ENCODE measurements at regions of chr17 and their contacts with region 1.

Region 1: GRCh38 chr17:18260332-18261144 is at the start of gene MIEF2:
- DNase-seq: peak; percentile 80 to 92 (median 91)
- ATAC-seq: peak; percentile 91
- H3K4me3 ChIP-seq: peak within 1 kb of the TSS; percentile 84
- H3K4me3 Mint-ChIP-seq: peak within 1 kb of the TSS; percentile 78 to 96 (median 84)
- H3K27ac ChIP-seq: peak within 1 kb of the TSS; percentile 95
- H3K27ac Mint-ChIP-seq: peak within 1 kb of the TSS; percentile 77 to 92 (median 84)
- H3K4me1 ChIP-seq: peaks cover 29 to 47% of the 10 kb centered on the region in 2 donors
- H3K4me1 Mint-ChIP-seq: peaks cover 11 to 57% (median 37%) of the 10 kb centered on the region in 7 donors
- H3K27me3 ChIP-seq: no peaks in the 10 kb centered on the region
- H3K27me3 Mint-ChIP-seq: no peaks in the 10 kb centered on the region
- total RNA-seq, gene MIEF2: 6.5 to 22.5 (median 15.1) TPM

Region 2: DNA sequence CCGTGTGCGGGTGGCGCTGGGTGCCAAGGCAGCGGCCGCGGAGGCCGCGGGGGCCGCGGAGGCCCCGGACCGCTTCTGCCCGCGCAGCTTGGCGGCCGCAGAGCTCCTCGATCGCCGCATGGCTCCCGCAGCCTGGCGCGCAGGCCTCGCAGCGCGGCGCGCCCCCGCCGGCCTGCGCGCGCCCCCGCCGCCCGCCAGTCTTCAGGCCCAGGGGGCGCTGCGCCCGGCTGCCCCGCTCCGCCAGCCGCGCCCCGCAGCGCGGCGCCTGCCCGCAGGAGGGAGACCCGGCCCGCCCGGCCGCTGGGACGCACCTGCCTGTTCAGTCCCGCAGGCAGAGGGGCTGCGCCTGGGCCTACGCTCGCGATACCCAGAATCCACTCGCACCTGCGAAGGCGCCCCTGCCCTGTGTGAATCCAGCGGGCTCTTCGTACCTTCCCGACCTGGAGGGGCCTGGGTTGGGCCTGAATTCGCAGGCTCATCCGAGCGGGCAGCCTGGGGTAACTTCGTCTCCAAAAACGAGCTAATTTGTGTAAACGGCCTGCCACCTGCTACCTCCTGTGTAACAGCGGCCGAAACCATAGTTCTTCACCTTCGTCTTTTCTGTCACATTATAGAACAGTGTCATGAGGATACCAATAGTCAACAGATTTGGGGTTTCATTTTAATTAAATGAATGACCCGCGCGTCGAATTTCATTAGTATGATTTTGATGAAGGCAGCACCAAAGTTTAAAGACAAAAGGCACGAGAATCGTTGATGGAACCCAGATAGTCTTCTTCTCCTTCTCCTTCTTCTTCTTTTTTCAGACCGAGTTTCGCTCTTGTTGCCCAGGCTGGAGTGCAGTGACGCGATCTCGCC is 1907.0 kb before region 1 on chr17 and contains the start of gene CENPV:
- CTCF ChIA-PET with region 1: no interaction called
- POLR2A ChIA-PET with region 1: no interaction called
- intact Hi-C with region 1: loop called in 1 of 2 experiments (anchors 2 kb)
- DNase-seq: peak; percentile 62 to 76 (median 71)
- ATAC-seq: peak; percentile 96
- H3K4me3 ChIP-seq: peak within 1 kb of the TSS; percentile 78
- H3K4me3 Mint-ChIP-seq: peak within 1 kb of the TSS; percentile 89 to 98 (median 95)
- H3K27ac ChIP-seq: peak within 1 kb of the TSS; percentile 73
- H3K27ac Mint-ChIP-seq: peak within 1 kb of the TSS; percentile 73 to 98 (median 86)
- H3K4me1 ChIP-seq: peaks cover 4 to 5% of the 10 kb centered on the region in 2 donors
- H3K4me1 Mint-ChIP-seq: peaks cover 11 to 23% (median 19%) of the 10 kb centered on the region in 7 donors
- H3K27me3 ChIP-seq: no peaks in the 10 kb centered on the region
- H3K27me3 Mint-ChIP-seq: peaks cover 0 to 27% (median 0%) of the 10 kb centered on the region in 5 donors
- total RNA-seq, gene CENPV: 9.8 to 30.3 (median 21.7) TPM

Region 3: DNA sequence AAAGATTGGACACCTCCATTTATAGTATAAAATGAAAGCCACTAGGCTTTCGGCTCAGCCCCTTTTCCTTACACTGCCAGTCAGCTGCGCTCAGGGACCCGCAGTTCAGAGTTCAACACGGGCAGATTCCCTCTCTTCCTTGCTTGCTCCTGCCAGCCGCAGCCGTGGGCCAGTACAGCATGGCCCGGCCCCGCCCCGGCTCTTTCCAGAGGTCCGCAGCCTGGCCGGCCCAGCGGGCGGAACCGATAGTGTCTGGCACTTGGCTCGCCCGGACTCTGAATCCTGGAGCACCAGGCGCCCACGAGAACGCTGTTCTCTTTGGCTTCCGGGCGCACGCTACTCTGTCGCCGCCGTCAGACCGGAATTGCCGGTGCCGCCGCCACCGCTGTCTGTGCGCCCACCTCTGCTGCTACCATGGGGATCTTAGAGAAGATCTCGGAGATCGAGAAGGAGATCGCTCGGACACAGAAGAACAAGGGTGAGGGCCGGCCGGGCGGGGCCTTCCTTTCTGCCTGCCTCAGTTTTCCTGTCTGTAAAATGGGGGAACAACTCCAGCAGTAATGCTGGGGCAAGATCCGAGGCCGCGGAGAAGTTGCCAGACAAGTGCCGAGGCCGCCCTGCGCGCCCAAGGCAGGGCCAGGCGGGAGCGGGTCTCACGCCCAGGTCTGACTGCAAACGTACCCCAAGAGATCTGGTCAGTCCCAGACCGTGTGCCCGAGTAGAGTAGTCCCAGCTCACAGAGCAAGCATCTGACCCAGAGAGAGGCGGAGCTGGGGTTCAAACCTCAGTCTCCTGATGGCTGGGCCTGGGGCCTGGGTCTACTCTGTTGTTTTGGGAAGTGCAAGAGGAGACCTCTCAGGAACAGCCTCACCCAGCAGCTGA is 172.7 kb before region 1 on chr17 and contains the start of gene DRG2:
- CTCF ChIA-PET with region 1: no interaction called
- POLR2A ChIA-PET with region 1: no interaction called
- intact Hi-C with region 1: loop called in 1 of 2 experiments (anchors 5 kb)
- DNase-seq: peak; percentile 79 to 94 (median 85)
- ATAC-seq: peak; percentile 98
- H3K4me3 ChIP-seq: peak within 1 kb of the TSS; percentile 84
- H3K4me3 Mint-ChIP-seq: peak within 1 kb of the TSS; percentile 97 to 100 (median 98)
- H3K27ac ChIP-seq: peak within 1 kb of the TSS; percentile 85
- H3K27ac Mint-ChIP-seq: peak within 1 kb of the TSS; percentile 96 to 99 (median 98)
- H3K4me1 ChIP-seq: peaks cover 9 to 12% of the 10 kb centered on the region in 2 donors
- H3K4me1 Mint-ChIP-seq: peaks cover 19 to 35% (median 27%) of the 10 kb centered on the region in 7 donors
- H3K27me3 ChIP-seq: no peaks in the 10 kb centered on the region
- H3K27me3 Mint-ChIP-seq: no peaks in the 10 kb centered on the region
- total RNA-seq, gene DRG2: 39.6 to 54.7 (median 48.8) TPM

Region 4: GRCh38 chr17:18225121-18225566 is 35.4 kb before region 1 on chr17:
- CTCF ChIA-PET with region 1: interaction called, 5 read pairs
- POLR2A ChIA-PET with region 1: interaction called, 3 read pairs
- intact Hi-C with region 1: loop called (anchors 1 kb)
- DNase-seq: peak; percentile 92 to 98 (median 94)
- ATAC-seq: peak; percentile 99
- H3K4me3 ChIP-seq: peak overlapping the region; percentile 46
- H3K4me3 Mint-ChIP-seq: peak overlapping the region; percentile 54 to 94 (median 68)
- H3K27ac ChIP-seq: peak overlapping the region; percentile 34
- H3K27ac Mint-ChIP-seq: peak overlapping the region in 4 of 9 donors; percentile 64 to 80 (median 77)
- H3K4me1 ChIP-seq: peaks cover 7 to 13% of the 10 kb centered on the region in 2 donors
- H3K4me1 Mint-ChIP-seq: peaks cover 24 to 30% (median 27%) of the 10 kb centered on the region in 7 donors
- H3K27me3 ChIP-seq: no peaks in the 10 kb centered on the region
- H3K27me3 Mint-ChIP-seq: no peaks in the 10 kb centered on the region

Region 5: GRCh38 chr17:18248300-18248731 is 12.2 kb before region 1 on chr17:
- CTCF ChIA-PET with region 1: interaction called, 4 read pairs
- POLR2A ChIA-PET with region 1: no interaction called
- intact Hi-C with region 1: loop called in 1 of 2 experiments (anchors 1 kb)
- DNase-seq: peak; percentile 47 to 75 (median 64)
- ATAC-seq: peak; percentile 84
- H3K4me3 ChIP-seq: no peak overlapping the region
- H3K4me3 Mint-ChIP-seq: no peak overlapping the region
- H3K27ac ChIP-seq: no peak overlapping the region
- H3K27ac Mint-ChIP-seq: peak overlapping the region in 7 of 9 donors; percentile 14 to 88 (median 62)
- H3K4me1 ChIP-seq: no peaks in the 10 kb centered on the region
- H3K4me1 Mint-ChIP-seq: peaks cover 0 to 8% (median 4%) of the 10 kb centered on the region in 7 donors
- H3K27me3 ChIP-seq: no peaks in the 10 kb centered on the region
- H3K27me3 Mint-ChIP-seq: no peaks in the 10 kb centered on the region

Region 6: GRCh38 chr17:18363101-18364049 is 102.8 kb after region 1 on chr17 and contains the start of gene SHMT1:
- CTCF ChIA-PET with region 1: no interaction called
- POLR2A ChIA-PET with region 1: no interaction called
- intact Hi-C with region 1: loop called in 1 of 2 experiments (anchors 2 kb)
- DNase-seq: peak; percentile 83 to 95 (median 88)
- ATAC-seq: peak; percentile 100
- H3K4me3 ChIP-seq: peak within 1 kb of the TSS; percentile 83
- H3K4me3 Mint-ChIP-seq: peak within 1 kb of the TSS; percentile 85 to 96 (median 92)
- H3K27ac ChIP-seq: peak within 1 kb of the TSS; percentile 65
- H3K27ac Mint-ChIP-seq: peak within 1 kb of the TSS; percentile 44 to 87 (median 81)
- H3K4me1 ChIP-seq: peaks cover 8 to 9% of the 10 kb centered on the region in 2 donors
- H3K4me1 Mint-ChIP-seq: peaks cover 10 to 27% (median 18%) of the 10 kb centered on the region in 7 donors
- H3K27me3 ChIP-seq: no peaks in the 10 kb centered on the region
- H3K27me3 Mint-ChIP-seq: peaks cover 0 to 1% (median 0%) of the 10 kb centered on the region in 5 donors
- total RNA-seq, gene SHMT1: 7.5 to 44.0 (median 14.7) TPM

Measured in naive thymus-derived CD4-positive, alpha-beta T cell (primary cell).